CD8-positive, alpha-beta T cell (primary cell): ENCODE measurements at regions of chr6 and their contacts with region 1.

Region 1: GRCh38 chr6:135183532-135184440 is 2.7 kb downstream of the MYB start:
- DNase-seq: peak; percentile 54 to 87 (median 75)
- ATAC-seq: peak; percentile 37
- H3K4me3 ChIP-seq: peak overlapping the region; percentile 52 to 58
- H3K4me3 Mint-ChIP-seq: peak overlapping the region; percentile 91
- H3K27ac ChIP-seq: peak overlapping the region in 1 of 2 experiments; percentile 41
- H3K27ac Mint-ChIP-seq: peak overlapping the region; percentile 84
- H3K4me1 ChIP-seq: peaks cover 9% of the 10 kb centered on the region
- H3K4me1 Mint-ChIP-seq: peaks cover 23% of the 10 kb centered on the region
- H3K27me3 ChIP-seq: no peaks in the 10 kb centered on the region
- H3K27me3 Mint-ChIP-seq: no peaks in the 10 kb centered on the region
- CTCF ChIP-seq: peak; percentile 70

Region 2: DNA sequence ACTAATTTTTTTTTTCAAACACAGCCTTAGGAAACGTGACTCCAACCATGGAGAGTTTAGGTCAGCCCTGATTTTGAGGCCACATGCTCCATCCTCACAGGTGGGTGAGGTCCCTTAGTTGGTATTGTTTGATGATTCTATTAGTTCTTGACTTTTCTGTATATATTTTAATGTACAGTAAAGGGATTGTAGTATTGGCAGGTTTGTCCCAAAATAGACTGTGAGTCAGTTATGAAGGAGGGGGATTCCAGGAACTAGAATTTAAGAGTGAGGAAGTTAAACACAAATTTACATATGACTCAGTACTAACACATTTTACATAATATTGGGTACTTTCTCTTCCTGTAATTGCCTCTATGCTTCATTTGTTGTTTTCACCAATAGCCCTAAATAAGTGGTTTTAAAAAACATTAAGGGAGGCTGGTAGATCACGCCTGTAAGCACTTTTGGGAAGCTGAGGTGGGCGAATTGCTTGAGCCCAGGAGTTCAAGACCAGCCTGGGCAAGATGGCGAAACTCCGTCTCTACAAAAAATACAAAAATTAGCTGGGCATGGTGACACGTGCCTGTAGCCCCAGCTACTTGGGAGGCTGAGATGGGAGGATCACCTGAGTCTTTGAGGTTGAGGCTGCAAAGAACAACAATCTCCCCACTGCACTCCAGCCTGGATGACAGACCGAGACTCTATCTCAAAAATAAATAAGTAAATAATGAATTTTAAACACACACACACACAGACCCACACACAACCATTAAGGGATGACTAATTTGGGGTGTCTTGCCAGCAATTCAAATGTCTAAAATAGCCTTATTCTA is 947.6 kb before region 1 on chr6:
- CTCF ChIA-PET with region 1: no interaction called
- POLR2A ChIA-PET with region 1: no interaction called
- intact Hi-C with region 1: loop called in 1 of 2 experiments (anchors 5 kb)
- DNase-seq: peak in 2 of 9 experiments; percentile 50 to 69
- ATAC-seq: peak; percentile 38
- H3K4me3 ChIP-seq: no peak overlapping the region
- H3K4me3 Mint-ChIP-seq: no peak overlapping the region
- H3K27ac ChIP-seq: no peak overlapping the region
- H3K27ac Mint-ChIP-seq: no peak overlapping the region
- H3K4me1 ChIP-seq: peaks cover 24% of the 10 kb centered on the region
- H3K4me1 Mint-ChIP-seq: peaks cover 33% of the 10 kb centered on the region
- H3K27me3 ChIP-seq: no peaks in the 10 kb centered on the region
- H3K27me3 Mint-ChIP-seq: no peaks in the 10 kb centered on the region
- CTCF ChIP-seq: no peak

Region 3: GRCh38 chr6:135088818-135089809 is 94.7 kb before region 1 on chr6:
- CTCF ChIA-PET with region 1: interaction called, 16 read pairs
- POLR2A ChIA-PET with region 1: interaction called, 10 read pairs
- intact Hi-C with region 1: loop called (anchors 2 kb)
- DNase-seq: peak in 3 of 9 experiments; percentile 22 to 64 (median 57)
- ATAC-seq: peak; percentile 67
- H3K4me3 ChIP-seq: peak overlapping the region in 1 of 2 experiments; percentile 48
- H3K4me3 Mint-ChIP-seq: peak overlapping the region; percentile 73
- H3K27ac ChIP-seq: no peak overlapping the region
- H3K27ac Mint-ChIP-seq: peak overlapping the region; percentile 87
- H3K4me1 ChIP-seq: peaks cover 70% of the 10 kb centered on the region
- H3K4me1 Mint-ChIP-seq: peaks cover 79% of the 10 kb centered on the region
- H3K27me3 ChIP-seq: no peaks in the 10 kb centered on the region
- H3K27me3 Mint-ChIP-seq: no peaks in the 10 kb centered on the region
- CTCF ChIP-seq: peak; percentile 58

Region 4: DNA sequence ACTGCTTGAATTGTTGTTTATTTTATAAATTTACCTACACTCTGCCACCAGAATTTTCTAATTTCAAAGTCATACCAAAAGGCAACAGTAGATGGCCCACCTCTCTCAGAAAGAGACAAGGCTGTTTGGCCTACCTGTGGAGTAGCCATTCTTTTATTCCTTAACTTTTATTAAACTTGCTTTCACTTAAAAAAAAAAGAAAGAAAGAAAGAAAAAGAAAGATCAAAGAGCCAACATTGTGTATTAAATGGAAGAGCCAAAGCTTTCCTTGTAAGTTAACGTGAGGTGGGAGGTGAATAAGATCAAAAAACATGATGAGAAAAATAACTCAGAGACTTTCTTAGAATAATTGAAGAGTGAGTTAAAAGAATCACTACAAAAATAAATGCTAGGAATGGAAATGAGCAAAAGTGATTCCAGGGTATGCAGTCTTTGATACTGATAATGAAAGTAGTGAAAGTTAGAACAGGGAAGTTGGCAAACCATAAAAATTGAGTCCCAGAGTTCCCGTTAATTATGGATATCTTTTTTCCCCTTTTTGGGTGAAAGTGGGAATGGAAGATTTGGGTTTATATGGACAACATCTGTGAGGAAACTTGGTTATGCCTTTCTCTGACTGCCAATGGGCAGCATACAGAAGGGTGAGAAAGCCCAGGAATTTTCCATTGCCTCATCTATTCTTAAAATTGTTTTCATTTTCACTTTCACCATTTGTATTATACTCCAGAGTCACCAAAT is 38.6 kb before region 1 on chr6:
- CTCF ChIA-PET with region 1: interaction called, 64 read pairs
- POLR2A ChIA-PET with region 1: interaction called, 4 read pairs
- intact Hi-C with region 1: loop called (anchors 1 kb)
- DNase-seq: peak in 2 of 9 experiments; percentile 51 to 65
- ATAC-seq: peak; percentile 79
- H3K4me3 ChIP-seq: no peak overlapping the region
- H3K4me3 Mint-ChIP-seq: peak overlapping the region; percentile 32
- H3K27ac ChIP-seq: peak overlapping the region in 1 of 2 experiments; percentile 9
- H3K27ac Mint-ChIP-seq: peak overlapping the region; percentile 58
- H3K4me1 ChIP-seq: peaks cover 14% of the 10 kb centered on the region
- H3K4me1 Mint-ChIP-seq: peaks cover 39% of the 10 kb centered on the region
- H3K27me3 ChIP-seq: no peaks in the 10 kb centered on the region
- H3K27me3 Mint-ChIP-seq: no peaks in the 10 kb centered on the region
- CTCF ChIP-seq: peak; percentile 81

Region 5: DNA sequence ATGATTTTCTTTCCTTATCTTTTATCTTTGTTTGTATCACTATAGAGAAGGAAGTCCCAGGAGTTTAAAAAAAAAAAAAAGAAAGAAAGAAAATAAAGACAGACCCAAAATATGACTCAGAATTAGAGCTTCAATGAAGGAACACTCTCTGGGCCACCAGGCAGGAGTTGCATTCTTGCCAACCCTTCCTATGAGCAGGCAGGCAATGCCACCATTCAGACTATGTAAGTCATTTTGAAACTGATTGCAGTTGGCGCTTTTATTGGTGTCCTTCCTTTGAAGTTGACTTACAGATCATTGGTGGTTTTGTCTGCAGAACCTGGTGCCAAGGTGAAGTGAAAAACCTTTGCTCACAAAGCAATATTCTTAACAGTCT is 47.7 kb after region 1 on chr6:
- CTCF ChIA-PET with region 1: no interaction called
- POLR2A ChIA-PET with region 1: no interaction called
- intact Hi-C with region 1: no loop called
- DNase-seq: no peak
- ATAC-seq: no peak
- H3K4me3 ChIP-seq: no peak overlapping the region
- H3K4me3 Mint-ChIP-seq: no peak overlapping the region
- H3K27ac ChIP-seq: no peak overlapping the region
- H3K27ac Mint-ChIP-seq: no peak overlapping the region
- H3K4me1 ChIP-seq: no peaks in the 10 kb centered on the region
- H3K4me1 Mint-ChIP-seq: peaks cover 3% of the 10 kb centered on the region
- H3K27me3 ChIP-seq: no peaks in the 10 kb centered on the region
- H3K27me3 Mint-ChIP-seq: no peaks in the 10 kb centered on the region
- CTCF ChIP-seq: no peak

Region 6: GRCh38 chr6:135423649-135424128 is 239.9 kb after region 1 on chr6:
- CTCF ChIA-PET with region 1: no interaction called
- POLR2A ChIA-PET with region 1: no interaction called
- intact Hi-C with region 1: loop called in 1 of 2 experiments (anchors 1 kb)
- DNase-seq: peak in 2 of 9 experiments; percentile 35 to 47
- ATAC-seq: peak; percentile 48
- H3K4me3 ChIP-seq: no peak overlapping the region
- H3K4me3 Mint-ChIP-seq: no peak overlapping the region
- H3K27ac ChIP-seq: no peak overlapping the region
- H3K27ac Mint-ChIP-seq: no peak overlapping the region
- H3K4me1 ChIP-seq: no peaks in the 10 kb centered on the region
- H3K4me1 Mint-ChIP-seq: no peaks in the 10 kb centered on the region
- H3K27me3 ChIP-seq: no peaks in the 10 kb centered on the region
- H3K27me3 Mint-ChIP-seq: no peaks in the 10 kb centered on the region
- CTCF ChIP-seq: peak; percentile 81